ENCODE measurements at regions of chr11 and their contacts with region 1.

Region 1: DNA sequence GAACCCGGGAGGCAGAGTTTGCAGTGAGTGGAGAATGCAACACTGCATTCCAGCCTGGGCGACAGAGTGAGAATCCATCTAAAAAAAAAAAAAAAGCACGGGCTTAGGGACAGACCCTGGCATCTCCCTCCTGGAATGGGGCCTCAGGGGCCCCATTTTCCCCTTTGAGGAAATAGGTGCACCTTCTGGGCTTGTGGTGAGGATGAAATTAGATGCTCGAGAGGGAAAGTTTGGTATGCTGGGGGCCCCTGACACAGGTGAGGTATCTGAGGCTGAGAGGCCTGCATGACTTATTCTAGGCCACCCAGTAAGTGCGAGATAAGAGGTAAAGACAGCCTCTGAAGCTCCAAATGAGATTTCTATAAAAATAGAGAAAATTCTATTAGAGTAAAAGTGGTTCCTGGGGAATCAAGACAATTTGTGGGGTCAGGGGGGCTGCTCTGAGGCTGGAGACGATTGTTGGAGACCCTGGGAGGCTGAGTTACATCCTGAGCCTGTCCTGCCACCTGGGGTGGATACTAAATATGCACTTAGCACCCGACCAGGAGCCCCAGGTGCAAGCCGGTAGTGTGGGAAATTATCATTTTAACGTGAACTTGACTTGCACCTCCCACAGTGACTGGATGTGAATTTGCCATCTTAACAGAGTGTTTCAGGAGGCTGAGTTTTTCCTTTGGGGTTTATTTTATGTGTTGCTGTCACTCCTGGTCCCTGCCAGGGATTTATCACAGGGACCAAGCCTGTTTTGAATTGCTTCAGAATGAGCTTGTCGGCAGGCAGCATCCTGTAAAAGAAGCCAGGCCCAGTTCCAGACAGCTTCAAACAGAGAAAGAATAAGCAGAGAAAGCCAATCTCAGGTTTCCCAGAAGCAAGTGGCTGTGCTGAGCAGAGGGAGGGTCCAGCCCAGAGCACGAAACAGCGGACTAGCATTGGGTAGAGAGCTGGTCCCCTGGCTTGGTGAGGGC is 48.4 kb upstream of the TSKU start:
- DNase-seq: no peak
- H3K4me3 ChIP-seq: peak overlapping the region in 1 of 4 donors; percentile 8
- H3K27ac ChIP-seq: peak overlapping the region in 1 of 4 donors; percentile 25
- H3K4me1 ChIP-seq: peaks cover 0 to 22% (median 10%) of the 10 kb centered on the region in 3 donors
- H3K27me3 ChIP-seq: no peaks in the 10 kb centered on the region
- CTCF ChIP-seq: no peak
- POLR2A ChIP-seq: no peak

Region 2: DNA sequence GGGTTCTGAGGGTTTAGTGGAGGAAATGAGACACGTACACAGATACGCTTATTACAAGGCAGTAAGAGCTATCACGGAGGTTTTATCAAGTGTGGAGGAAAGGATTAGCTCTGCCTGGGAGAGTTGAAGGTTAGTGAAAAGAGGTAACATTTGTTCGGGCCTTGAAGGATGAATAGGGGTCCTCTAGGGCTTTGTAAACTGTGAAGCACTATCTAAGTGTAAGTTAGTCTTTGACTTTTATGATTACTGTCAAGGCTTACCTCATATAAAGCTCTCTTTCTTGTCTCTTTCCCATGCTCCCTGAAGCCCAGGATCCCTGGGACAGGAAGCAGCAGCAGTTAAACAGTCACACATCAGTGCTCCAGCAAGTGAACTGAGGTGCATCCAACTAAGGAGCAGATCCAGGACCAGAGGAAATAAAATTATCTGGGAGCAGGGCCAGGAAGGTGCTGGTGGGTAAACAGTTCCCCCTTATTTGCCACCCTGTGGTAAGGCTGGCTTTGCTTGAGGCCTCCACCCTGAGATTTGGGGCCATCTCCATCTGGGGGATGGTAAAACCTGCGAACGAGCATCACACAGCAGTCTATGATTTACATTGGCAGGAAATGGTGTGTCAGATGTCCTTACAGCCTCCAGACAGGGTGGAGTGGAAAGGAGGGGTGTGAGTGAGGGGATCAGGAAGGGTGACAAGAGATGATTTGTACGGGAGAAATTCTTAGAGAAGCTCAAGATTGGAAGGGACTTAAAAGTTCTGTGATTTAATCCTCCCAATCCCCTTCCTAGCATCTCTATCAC is 326.4 kb before region 1 on chr11:
- intact Hi-C with region 1: no loop called
- DNase-seq: no peak
- H3K4me3 ChIP-seq: no peak overlapping the region
- H3K27ac ChIP-seq: no peak overlapping the region
- H3K4me1 ChIP-seq: no peaks in the 10 kb centered on the region
- H3K27me3 ChIP-seq: peaks cover 0 to 18% (median 0%) of the 10 kb centered on the region in 4 donors
- CTCF ChIP-seq: no peak
- POLR2A ChIP-seq: no peak

Region 3: DNA sequence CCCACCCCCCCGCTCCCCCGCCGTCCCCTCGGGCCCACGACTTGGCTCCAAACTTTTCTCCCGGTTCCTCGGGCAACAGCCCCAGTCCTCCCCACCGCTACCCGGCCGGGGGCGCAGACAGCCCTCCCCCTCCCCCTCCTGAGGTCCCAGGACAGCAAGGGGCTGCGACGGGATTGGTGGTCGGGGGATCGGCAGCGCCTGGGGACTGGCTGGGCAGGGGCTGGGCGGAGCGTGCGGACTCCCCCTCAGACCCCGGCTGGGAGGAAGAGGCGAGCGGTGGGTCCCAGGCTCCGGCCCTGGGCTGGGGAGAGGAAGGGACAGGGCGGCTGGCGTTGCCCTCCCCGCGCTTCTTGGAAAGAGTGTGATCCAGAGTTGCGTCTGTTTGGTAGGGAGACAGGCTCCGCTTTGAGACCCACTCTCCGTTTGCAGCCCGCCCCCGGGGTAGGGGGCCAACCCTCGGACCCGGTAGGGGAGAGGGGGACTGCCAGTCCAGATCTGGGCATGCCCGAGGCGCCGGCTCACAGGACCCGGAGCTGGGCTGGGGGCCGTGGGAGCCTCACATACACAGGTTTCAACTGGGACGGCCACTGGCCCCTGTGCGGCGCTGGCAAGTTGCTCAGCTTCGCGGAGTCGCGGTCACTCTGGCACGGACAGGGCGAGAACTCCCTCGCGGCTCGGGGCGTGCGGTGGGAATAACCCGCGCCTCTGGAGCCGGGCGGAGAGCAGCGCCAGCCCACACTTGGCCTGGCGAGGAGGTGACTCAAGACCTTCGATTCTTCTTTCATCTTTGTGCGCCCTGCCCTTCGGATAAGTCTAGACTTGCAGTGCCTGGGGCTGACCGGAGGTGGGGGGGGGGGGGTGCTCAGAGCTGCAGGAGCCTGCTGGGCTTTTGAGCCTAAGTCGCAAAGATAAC is 49.4 kb after region 1 on chr11:
- intact Hi-C with region 1: no loop called
- DNase-seq: no peak
- H3K4me3 ChIP-seq: peak overlapping the region; percentile 72 to 98 (median 90)
- H3K27ac ChIP-seq: peak overlapping the region; percentile 91 to 99 (median 98)
- H3K4me1 ChIP-seq: peaks cover 51 to 89% (median 55%) of the 10 kb centered on the region in 3 donors
- H3K27me3 ChIP-seq: peaks cover 0 to 12% (median 0%) of the 10 kb centered on the region in 4 donors
- CTCF ChIP-seq: no peak
- POLR2A ChIP-seq: peak in 2 of 4 donors; percentile 36 to 62

Region 4: DNA sequence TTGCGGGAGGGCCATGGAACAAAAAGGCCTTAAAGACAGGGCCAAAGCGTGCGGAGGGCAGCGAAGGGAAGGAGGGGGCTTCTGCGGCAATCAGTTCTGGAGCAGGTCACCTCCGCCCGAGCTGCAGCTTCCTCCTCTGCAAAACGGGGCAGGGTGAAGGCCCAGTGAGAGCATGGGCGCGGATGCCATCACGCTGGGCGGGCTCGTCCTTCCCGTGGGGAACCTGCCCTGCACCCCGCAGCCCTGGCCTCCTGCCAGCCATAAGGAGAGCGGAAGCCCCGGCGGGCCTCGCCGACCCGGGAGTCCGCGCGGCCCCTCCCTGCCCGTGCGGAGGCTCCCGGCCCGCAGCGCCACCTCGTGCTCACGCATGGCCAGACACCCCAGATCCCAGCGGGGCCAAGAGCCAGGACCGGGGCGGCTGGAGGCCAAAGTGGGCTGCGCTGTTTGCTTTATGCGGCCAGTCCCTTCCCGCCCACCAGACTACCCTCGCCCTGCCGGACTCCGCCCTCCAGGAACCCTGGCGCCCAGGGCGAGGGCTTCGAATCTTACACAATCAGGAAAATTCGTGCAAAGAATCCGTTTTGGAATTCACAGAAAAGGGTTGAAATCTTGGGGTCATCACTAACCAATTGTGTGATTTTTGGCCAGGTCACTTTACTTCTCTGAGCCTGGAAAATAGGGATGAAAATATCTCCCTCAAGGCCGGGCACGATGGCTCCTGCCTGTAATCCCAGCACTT is 64.5 kb after region 1 on chr11:
- intact Hi-C with region 1: loop called (anchors 5 kb)
- DNase-seq: no peak
- H3K4me3 ChIP-seq: peak overlapping the region in 3 of 4 donors; percentile 26 to 54 (median 35)
- H3K27ac ChIP-seq: peak overlapping the region; percentile 63 to 80 (median 72)
- H3K4me1 ChIP-seq: peaks cover 27 to 99% (median 48%) of the 10 kb centered on the region in 3 donors
- H3K27me3 ChIP-seq: no peaks in the 10 kb centered on the region
- CTCF ChIP-seq: peak; percentile 89 to 97 (median 94)
- POLR2A ChIP-seq: peak in 1 of 4 donors; percentile 8

Region 5: DNA sequence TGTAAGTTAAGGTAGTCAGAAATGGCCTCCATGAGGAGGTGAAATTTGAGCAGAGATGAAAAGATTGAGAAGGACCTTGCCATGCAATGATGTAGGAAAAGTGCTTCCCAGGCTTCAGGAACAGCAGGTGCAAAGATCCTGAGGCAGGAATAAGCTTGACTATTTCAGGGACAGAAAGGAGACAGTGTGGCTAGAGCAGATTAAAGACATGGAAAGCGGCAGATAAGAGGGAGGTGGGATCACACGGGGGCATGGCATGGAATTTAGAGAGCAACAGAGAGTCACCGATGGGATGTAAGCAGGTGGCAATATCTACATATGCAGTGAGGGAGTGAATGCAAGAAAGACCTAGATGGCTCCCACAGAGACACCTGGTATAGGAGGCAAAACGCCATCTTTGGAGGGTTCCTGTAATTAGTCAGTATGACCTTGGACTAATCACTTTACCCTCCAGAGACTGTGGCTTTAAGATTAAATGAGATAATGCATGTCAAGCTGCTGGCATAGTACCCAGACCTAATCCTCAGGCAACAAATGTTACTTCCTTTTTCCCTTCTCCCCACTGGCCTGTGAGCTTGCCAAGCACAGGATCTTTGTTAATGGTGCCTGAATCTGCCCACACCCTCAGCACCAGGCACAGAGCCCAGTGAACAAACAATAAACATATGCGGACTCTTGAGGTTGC is 101.3 kb after region 1 on chr11:
- intact Hi-C with region 1: no loop called
- DNase-seq: no peak
- H3K4me3 ChIP-seq: no peak overlapping the region
- H3K27ac ChIP-seq: peak overlapping the region in 3 of 4 donors; percentile 12 to 59 (median 47)
- H3K4me1 ChIP-seq: peaks cover 13 to 79% (median 34%) of the 10 kb centered on the region in 3 donors
- H3K27me3 ChIP-seq: peaks cover 0 to 15% (median 0%) of the 10 kb centered on the region in 4 donors
- CTCF ChIP-seq: no peak
- POLR2A ChIP-seq: no peak

Region 6: DNA sequence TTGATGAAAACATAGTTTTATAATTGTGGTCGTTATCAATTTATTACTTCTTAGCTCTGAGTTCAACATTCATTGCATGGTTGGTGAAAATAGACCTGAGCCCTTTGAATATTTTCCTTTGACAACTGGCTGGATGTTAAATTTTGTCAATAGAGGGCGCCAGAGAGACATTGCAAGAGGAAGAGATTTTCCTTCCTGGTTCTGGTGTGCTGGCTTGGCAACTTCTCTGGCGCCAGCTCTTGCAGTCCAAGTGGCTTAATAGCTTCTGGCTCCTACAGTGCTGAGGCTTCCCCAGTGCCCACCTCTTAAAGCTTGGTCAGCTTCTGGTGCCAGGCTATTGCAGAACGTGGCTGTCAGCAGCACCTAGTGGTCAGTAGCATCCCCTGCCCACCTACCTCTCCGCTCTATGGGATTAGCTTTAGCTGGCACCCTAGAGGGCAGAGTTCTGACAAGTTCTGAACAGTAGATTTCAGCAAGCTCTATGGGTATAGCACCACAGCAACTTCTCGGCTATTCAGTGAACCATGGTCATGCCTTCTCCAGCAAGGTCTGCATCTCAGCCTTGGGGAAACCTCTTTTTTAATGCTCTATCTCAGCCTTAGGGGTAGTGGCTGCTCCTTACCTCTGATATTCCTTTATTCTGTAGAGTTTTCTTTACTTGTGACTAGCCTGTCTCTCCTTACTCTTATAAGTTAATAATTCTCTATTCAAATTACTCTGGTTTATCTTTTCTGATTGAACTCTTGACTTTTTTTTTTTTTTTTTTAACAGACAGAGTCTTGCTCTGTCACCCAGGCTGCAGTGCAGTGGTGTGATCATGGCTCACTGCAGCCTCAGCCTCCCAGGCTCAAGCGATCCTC is 185.4 kb after region 1 on chr11:
- intact Hi-C with region 1: loop called (anchors 10 kb)
- DNase-seq: peak; percentile 21
- H3K4me3 ChIP-seq: peak overlapping the region in 1 of 4 donors; percentile 35
- H3K27ac ChIP-seq: peak overlapping the region in 2 of 4 donors; percentile 3 to 14
- H3K4me1 ChIP-seq: peaks cover 3 to 20% (median 4%) of the 10 kb centered on the region in 3 donors
- H3K27me3 ChIP-seq: no peaks in the 10 kb centered on the region
- CTCF ChIP-seq: peak; percentile 81 to 95 (median 88)
- POLR2A ChIP-seq: no peak

Region 7: GRCh38 chr11:77047007-77047927 is 312.5 kb after region 1 on chr11:
- intact Hi-C with region 1: loop called (anchors 10 kb)
- DNase-seq: peak; percentile 61
- H3K4me3 ChIP-seq: peak overlapping the region; percentile 7 to 51 (median 32)
- H3K27ac ChIP-seq: peak overlapping the region in 1 of 4 donors; percentile 38
- H3K4me1 ChIP-seq: peaks cover 5 to 15% (median 10%) of the 10 kb centered on the region in 3 donors
- H3K27me3 ChIP-seq: peaks cover 0 to 35% (median 0%) of the 10 kb centered on the region in 4 donors
- CTCF ChIP-seq: peak; percentile 55 to 82 (median 70)
- POLR2A ChIP-seq: no peak

Measured in esophagus squamous epithelium (tissue), 5 donors.